Naive thymus-derived CD4-positive, alpha-beta T cell (primary cell): ENCODE measurements at regions of chr11 and their contacts with region 1.

Region 1: DNA sequence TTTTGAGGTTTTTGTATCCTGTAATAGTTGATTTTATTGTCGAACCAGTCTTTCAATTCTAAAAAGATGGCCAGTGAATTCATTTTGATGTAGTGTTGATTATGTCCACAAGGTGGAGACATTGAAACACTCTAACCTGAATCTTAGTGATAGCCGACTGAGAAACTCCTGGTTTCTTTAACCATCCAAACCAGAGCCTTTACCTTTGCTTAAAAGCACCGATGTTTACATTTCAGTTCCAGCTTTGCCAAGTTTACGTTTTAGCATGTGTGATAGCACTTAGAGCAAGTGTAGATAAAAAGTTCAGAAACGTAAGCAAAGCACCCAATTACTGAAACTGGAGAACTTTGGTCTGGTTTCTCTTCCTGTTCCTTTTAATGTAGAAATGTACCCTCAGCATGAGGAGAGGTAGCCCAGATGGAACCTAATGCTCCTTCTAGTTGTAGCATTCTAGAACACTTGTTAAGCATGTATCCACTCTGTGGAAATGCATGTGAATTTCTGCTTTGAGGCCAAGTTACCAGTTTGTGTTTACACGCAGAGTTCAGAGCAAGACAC is 208.6 kb downstream of the DBX1 start:
- DNase-seq: peak in 5 of 9 donors; percentile 19 to 30 (median 25)
- ATAC-seq: peak; percentile 68
- H3K4me3 ChIP-seq: no peak overlapping the region
- H3K4me3 Mint-ChIP-seq: peak overlapping the region in 9 of 10 donors; percentile 60 to 83 (median 73)
- H3K27ac ChIP-seq: no peak overlapping the region
- H3K27ac Mint-ChIP-seq: no peak overlapping the region
- H3K4me1 ChIP-seq: no peaks in the 10 kb centered on the region
- H3K4me1 Mint-ChIP-seq: peaks cover 0 to 9% (median 6%) of the 10 kb centered on the region in 7 donors
- H3K27me3 ChIP-seq: no peaks in the 10 kb centered on the region
- H3K27me3 Mint-ChIP-seq: peaks cover 7 to 38% (median 24%) of the 10 kb centered on the region in 5 donors

Region 2: GRCh38 chr11:20110908-20111669 is 159.5 kb after region 1 on chr11:
- CTCF ChIA-PET with region 1: no interaction called
- POLR2A ChIA-PET with region 1: no interaction called
- intact Hi-C with region 1: loop called (anchors 1 kb)
- DNase-seq: peak in 5 of 9 donors; percentile 9 to 29 (median 21)
- ATAC-seq: peak; percentile 77
- H3K4me3 ChIP-seq: no peak overlapping the region
- H3K4me3 Mint-ChIP-seq: no peak overlapping the region
- H3K27ac ChIP-seq: no peak overlapping the region
- H3K27ac Mint-ChIP-seq: peak overlapping the region in 1 of 9 donors; percentile 23
- H3K4me1 ChIP-seq: no peaks in the 10 kb centered on the region
- H3K4me1 Mint-ChIP-seq: peaks cover 0 to 6% (median 0%) of the 10 kb centered on the region in 7 donors
- H3K27me3 ChIP-seq: no peaks in the 10 kb centered on the region
- H3K27me3 Mint-ChIP-seq: peaks cover 0 to 20% (median 10%) of the 10 kb centered on the region in 5 donors

Region 3: DNA sequence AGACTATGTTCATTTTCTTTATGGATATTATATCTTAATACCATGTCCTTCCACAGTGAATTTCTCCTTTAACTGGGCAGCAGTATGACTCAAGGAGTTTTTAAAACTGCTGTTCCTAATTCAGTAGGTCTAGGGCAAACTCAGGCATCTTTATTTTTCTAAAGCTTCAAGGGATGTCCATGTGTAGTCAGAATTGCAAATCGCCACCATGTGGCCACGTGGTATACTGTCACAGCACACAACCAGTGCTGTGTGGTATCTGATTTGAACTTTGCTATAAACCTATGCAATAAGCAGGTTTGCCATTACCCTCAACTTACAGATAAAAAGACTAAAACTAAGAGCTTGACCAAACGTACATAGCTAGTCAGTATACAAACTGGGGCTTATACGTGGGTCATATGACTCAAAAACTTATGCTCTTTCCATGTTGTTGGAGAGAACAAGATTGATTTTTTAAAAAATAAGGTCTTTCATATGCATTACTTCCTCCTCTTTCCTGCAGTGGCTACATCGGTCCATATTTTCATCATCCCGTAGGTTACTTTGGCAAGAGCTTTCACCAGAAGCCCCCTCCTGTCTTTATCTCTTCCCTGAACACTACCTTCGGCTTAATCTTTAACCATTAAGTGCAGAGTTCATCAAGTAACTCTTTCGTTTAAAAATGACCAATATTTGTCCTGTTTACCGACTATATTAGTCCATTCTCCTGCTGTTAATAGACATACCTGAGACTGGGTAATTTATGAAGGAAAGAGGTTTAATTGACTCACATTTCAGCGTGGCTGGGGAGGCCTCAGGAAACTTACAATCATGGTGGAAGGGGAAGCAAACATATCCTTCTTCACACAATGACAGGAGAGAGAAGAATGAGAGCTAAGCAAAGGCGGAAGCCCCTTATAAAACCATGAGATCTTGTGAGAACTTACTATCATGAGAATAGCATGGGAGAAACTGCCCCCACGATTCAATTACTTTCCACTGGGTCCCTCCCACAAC is 403.9 kb after region 1 on chr11:
- CTCF ChIA-PET with region 1: no interaction called
- POLR2A ChIA-PET with region 1: no interaction called
- intact Hi-C with region 1: loop called (anchors 1 to 5 kb)
- DNase-seq: peak in 6 of 9 donors; percentile 14 to 38 (median 23)
- ATAC-seq: peak; percentile 62
- H3K4me3 ChIP-seq: no peak overlapping the region
- H3K4me3 Mint-ChIP-seq: no peak overlapping the region
- H3K27ac ChIP-seq: no peak overlapping the region
- H3K27ac Mint-ChIP-seq: no peak overlapping the region
- H3K4me1 ChIP-seq: peaks cover 4 to 5% of the 10 kb centered on the region in 2 donors
- H3K4me1 Mint-ChIP-seq: peaks cover 8 to 30% (median 14%) of the 10 kb centered on the region in 7 donors
- H3K27me3 ChIP-seq: no peaks in the 10 kb centered on the region
- H3K27me3 Mint-ChIP-seq: peaks cover 0 to 9% (median 0%) of the 10 kb centered on the region in 5 donors